CD4-positive, alpha-beta T cell (primary cell): ENCODE measurements at regions of chr19 and their contacts with region 1.

Region 1: GRCh38 chr19:4638828-4639530 is at the start of gene TNFAIP8L1:
- DNase-seq: peak; percentile 98 to 100 (median 99)
- ATAC-seq: peak; percentile 96
- H3K4me3 ChIP-seq: peak within 1 kb of the TSS; percentile 91
- H3K4me3 Mint-ChIP-seq: peak within 1 kb of the TSS; percentile 91
- H3K27ac ChIP-seq: peak within 1 kb of the TSS; percentile 86 to 87
- H3K27ac Mint-ChIP-seq: peak within 1 kb of the TSS; percentile 94
- H3K4me1 ChIP-seq: peaks cover 59% of the 10 kb centered on the region
- H3K4me1 Mint-ChIP-seq: peaks cover 32% of the 10 kb centered on the region
- H3K27me3 ChIP-seq: no peaks in the 10 kb centered on the region
- H3K27me3 Mint-ChIP-seq: no peaks in the 10 kb centered on the region
- CTCF ChIP-seq: no peak
- total RNA-seq, gene TNFAIP8L1: 4.4 to 5.1 TPM

Region 2: GRCh38 chr19:4246767-4247593 is 392.0 kb before region 1 on chr19 and contains the start of gene YJU2:
- CTCF ChIA-PET with region 1: no interaction called
- POLR2A ChIA-PET with region 1: no interaction called
- intact Hi-C with region 1: loop called in 1 of 2 experiments (anchors 10 kb)
- DNase-seq: peak; percentile 96 to 100 (median 98)
- ATAC-seq: peak; percentile 94
- H3K4me3 ChIP-seq: peak within 1 kb of the TSS; percentile 73
- H3K4me3 Mint-ChIP-seq: peak within 1 kb of the TSS; percentile 93
- H3K27ac ChIP-seq: peak within 1 kb of the TSS; percentile 94 to 99
- H3K27ac Mint-ChIP-seq: peak within 1 kb of the TSS; percentile 95
- H3K4me1 ChIP-seq: peaks cover 22% of the 10 kb centered on the region
- H3K4me1 Mint-ChIP-seq: peaks cover 17% of the 10 kb centered on the region
- H3K27me3 ChIP-seq: no peaks in the 10 kb centered on the region
- H3K27me3 Mint-ChIP-seq: peaks cover 1% of the 10 kb centered on the region
- CTCF ChIP-seq: peak; percentile 58
- total RNA-seq, gene YJU2: 32.9 to 33.7 TPM

Region 3: DNA sequence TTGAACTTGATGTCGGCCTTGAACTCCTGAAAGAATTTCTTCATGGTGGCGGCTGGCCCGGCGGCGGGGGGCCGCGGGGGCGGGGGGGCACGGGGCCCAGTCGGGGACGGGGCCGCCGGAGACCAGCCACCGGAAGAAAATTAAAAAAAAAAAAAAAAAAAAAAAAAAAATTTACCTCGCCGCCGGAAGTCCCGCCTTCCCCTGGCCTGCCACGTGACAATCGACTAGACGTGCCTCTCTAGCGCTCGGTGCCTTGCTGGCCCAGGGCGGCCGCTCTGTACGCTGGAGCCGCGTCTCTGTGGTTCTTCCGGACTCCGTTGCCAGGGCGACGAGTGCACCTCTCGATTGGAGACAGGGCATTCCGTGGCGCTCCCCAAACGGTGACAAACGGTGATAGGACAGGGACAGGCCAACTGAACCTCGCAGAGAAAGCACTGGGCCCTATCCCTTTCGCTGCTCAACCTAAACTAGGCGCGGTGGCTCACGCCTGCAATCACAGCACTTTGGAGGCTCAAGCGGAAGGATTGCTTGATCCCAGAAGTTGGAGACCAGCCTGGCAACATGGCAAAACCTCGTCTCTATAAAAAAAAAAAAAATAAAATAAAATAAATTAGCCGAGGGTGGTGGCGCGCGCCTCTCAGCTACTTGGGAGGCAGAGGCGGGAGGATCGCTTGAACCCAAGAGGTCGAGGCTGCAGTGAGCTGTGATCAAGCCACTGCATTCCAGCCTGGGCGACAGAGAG is 181.2 kb before region 1 on chr19 and contains the start of gene UBXN6:
- CTCF ChIA-PET with region 1: no interaction called
- POLR2A ChIA-PET with region 1: no interaction called
- intact Hi-C with region 1: loop called in 1 of 2 experiments (anchors 5 kb)
- DNase-seq: peak; percentile 96 to 100 (median 98)
- ATAC-seq: peak; percentile 95
- H3K4me3 ChIP-seq: peak within 1 kb of the TSS; percentile 70
- H3K4me3 Mint-ChIP-seq: peak within 1 kb of the TSS; percentile 94
- H3K27ac ChIP-seq: peak within 1 kb of the TSS; percentile 49 to 68
- H3K27ac Mint-ChIP-seq: peak within 1 kb of the TSS; percentile 89
- H3K4me1 ChIP-seq: peaks cover 25% of the 10 kb centered on the region
- H3K4me1 Mint-ChIP-seq: peaks cover 16% of the 10 kb centered on the region
- H3K27me3 ChIP-seq: no peaks in the 10 kb centered on the region
- H3K27me3 Mint-ChIP-seq: no peaks in the 10 kb centered on the region
- CTCF ChIP-seq: no peak
- total RNA-seq, gene UBXN6: 54.5 to 58.4 TPM

Region 4: DNA sequence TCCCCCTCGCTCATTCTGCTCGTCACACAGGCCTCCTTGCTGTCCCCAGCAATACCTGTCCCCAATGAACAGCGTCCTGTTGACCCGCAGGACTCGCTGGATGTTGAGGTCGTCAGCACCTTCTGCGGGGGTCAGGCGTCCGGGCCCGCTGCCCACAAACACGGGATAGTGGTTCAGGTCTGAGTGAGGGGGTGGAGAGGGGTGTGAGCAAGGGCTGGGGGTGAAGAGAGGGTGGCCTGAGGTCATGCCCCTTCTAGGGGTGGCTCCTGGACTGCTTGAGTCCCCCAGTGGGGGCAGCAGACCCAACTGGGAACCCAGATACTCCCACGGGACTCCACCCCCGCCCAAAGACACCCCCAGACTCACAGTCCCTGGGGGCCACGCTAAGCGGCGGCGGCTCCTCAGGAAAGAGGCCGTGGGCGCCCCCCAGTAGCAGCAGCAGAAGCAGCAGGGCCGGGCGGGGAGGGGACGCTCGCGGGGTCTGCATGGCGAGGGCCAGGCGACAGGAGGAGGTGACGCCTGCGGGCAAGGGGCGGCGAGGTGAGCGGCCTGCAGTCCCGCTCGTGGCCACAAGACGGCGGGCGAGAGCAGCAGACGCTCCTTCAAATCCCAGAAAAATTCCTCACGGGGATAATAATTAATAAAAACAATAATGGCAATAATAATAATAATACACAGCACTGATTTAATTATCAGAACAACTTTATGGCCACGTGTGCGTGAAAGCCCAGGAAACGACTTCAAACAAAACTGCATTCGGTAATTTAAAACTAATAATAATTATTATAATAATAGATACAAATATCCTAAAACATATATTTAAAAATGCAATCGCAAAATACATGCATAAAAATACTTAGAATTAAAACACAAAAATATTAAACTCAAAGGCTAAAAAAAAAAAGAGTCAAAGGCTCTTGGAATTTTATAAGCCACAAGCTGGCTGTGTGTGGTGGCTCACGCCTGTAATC is 80.7 kb before region 1 on chr19:
- CTCF ChIA-PET with region 1: no interaction called
- POLR2A ChIA-PET with region 1: no interaction called
- intact Hi-C with region 1: loop called (anchors 1 to 2 kb)
- DNase-seq: peak in 12 of 14 experiments; percentile 11 to 66 (median 23)
- ATAC-seq: no peak
- H3K4me3 ChIP-seq: no peak overlapping the region
- H3K4me3 Mint-ChIP-seq: no peak overlapping the region
- H3K27ac ChIP-seq: no peak overlapping the region
- H3K27ac Mint-ChIP-seq: no peak overlapping the region
- H3K4me1 ChIP-seq: peaks cover 7% of the 10 kb centered on the region
- H3K4me1 Mint-ChIP-seq: no peaks in the 10 kb centered on the region
- H3K27me3 ChIP-seq: no peaks in the 10 kb centered on the region
- H3K27me3 Mint-ChIP-seq: no peaks in the 10 kb centered on the region
- CTCF ChIP-seq: peak; percentile 100

Region 5: DNA sequence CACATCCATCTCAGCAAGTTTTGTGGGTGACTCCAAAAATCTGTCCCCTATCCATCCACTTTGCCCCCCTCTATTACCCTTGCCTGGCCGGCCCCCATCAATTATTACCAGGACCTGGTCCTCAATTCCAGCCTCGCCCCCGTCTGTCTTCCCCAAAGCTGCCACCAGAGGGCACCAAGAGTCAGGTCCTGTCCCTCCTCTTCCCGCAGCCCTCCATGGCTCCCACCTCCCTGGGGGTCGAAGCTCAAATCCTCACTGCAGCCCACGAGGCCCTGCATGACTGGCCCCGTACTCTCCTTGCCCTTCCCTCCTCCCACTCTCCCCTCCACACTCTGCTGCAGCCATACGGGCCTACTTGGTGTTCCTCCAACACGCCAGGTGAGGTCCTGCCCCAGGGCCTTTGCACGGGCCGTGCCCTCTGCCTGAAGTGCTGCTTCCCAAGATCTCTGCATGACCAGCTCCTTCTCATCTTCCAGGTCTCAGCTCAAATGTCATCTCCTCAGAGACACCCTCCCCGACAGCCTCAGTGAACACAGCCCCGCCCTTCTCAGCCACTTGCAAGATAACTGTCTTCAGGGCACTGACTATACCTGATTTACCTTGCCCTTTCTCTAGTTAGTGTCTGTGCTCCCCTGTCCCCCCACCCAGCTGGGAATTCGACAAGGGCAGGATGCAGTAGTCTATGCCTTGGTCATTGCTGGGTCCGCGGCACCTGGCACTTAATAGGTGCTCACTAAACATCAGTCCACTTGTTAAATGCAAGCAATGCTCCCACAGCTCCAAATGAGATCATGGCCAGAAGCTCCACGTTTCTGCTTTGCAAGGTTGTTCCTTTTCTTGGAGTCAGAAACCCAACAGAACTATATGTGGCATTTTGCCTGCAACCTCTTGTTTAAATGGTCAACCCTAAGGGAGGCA is 62.7 kb before region 1 on chr19:
- CTCF ChIA-PET with region 1: interaction called, 14 read pairs
- POLR2A ChIA-PET with region 1: interaction called, 3 read pairs
- intact Hi-C with region 1: loop called in 1 of 2 experiments (anchors 1 kb)
- DNase-seq: peak; percentile 52 to 78 (median 64)
- ATAC-seq: peak; percentile 62
- H3K4me3 ChIP-seq: no peak overlapping the region
- H3K4me3 Mint-ChIP-seq: no peak overlapping the region
- H3K27ac ChIP-seq: no peak overlapping the region
- H3K27ac Mint-ChIP-seq: no peak overlapping the region
- H3K4me1 ChIP-seq: no peaks in the 10 kb centered on the region
- H3K4me1 Mint-ChIP-seq: no peaks in the 10 kb centered on the region
- H3K27me3 ChIP-seq: peaks cover 39 to 58% of the 10 kb centered on the region in 2 experiments
- H3K27me3 Mint-ChIP-seq: peaks cover 47% of the 10 kb centered on the region
- CTCF ChIP-seq: peak; percentile 65

Region 6: DNA sequence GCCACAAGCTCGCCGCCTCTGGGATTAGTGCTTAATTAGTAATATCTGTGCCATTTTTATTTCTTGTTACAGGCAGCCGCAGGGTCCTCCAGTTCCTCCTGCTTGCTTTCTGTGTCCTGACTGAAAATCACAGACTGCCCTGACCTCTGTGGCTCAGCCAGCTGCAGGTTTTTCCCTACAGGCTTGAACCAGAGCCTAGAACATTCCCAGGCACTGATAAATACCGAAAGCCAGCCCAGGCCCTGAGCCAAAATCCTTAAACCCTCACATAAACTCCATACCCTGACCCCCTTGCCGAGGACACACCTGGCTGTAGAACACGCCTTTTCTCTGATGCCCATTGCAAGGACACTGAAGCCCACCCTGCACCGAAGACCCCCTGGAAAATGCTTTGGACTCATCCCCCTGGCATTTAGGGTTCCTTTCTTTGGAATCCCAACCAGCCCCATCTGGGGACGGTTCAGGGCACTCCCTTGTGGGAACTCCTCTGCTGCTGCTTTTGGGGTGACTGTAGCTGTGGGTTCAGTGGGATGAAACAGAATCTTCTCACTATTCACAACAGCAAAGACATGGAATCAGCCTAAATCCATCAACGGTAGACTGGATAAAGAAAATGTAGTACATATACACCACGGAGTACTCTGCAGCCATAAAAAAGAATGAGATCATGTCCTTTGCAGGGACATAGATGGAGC is 69.1 kb after region 1 on chr19:
- CTCF ChIA-PET with region 1: no interaction called
- POLR2A ChIA-PET with region 1: no interaction called
- intact Hi-C with region 1: no loop called
- DNase-seq: no peak
- ATAC-seq: no peak
- H3K4me3 ChIP-seq: no peak overlapping the region
- H3K4me3 Mint-ChIP-seq: no peak overlapping the region
- H3K27ac ChIP-seq: no peak overlapping the region
- H3K27ac Mint-ChIP-seq: no peak overlapping the region
- H3K4me1 ChIP-seq: peaks cover 7% of the 10 kb centered on the region
- H3K4me1 Mint-ChIP-seq: no peaks in the 10 kb centered on the region
- H3K27me3 ChIP-seq: no peaks in the 10 kb centered on the region
- H3K27me3 Mint-ChIP-seq: no peaks in the 10 kb centered on the region
- CTCF ChIP-seq: no peak

Region 7: DNA sequence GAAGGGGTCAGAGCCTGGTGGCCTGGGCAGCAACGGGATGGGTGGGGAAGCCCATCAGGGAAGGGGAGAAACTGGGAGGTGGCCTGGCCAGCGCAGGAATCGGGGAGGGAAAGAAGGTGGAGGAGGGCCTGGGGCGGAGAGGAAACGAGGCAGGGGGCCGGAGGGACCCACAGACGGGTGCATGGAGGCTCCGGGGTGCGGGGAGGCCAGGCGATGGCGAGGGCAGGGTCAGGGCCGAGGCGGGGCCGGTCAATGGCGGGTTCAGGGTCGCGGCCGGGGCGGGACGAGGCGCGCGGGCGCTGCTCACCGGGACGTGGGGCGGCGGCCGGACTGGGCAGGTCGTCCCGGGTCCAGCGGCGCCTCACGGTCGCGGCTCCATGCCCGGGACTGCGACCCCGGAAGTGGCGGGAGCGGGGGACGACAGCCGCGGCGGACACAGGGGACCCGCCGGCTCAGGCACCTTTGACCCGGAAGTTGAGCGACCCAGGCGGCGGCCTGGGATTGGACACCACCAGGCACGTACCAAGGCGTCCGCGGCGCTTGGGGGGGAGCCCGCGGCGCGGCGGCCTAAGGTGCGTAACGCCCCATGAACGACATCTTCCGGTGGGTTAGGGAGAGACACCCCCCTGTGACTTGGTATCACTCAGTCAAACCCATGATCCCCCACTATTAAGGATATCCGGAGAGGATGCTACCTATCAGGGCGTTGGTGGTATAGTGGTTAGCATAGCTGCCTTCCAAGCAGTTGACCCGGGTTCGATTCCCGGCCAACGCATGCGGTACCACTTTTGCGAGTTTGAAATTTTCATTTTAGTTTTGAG is 84.6 kb after region 1 on chr19 and contains the start of gene DPP9:
- CTCF ChIA-PET with region 1: interaction called, 3 read pairs
- POLR2A ChIA-PET with region 1: interaction called, 3 read pairs
- intact Hi-C with region 1: loop called in 1 of 2 experiments (anchors 1 kb)
- DNase-seq: peak; percentile 93 to 100 (median 96)
- ATAC-seq: peak; percentile 93
- H3K4me3 ChIP-seq: peak within 1 kb of the TSS; percentile 97
- H3K4me3 Mint-ChIP-seq: peak within 1 kb of the TSS; percentile 95
- H3K27ac ChIP-seq: peak within 1 kb of the TSS; percentile 64 to 85
- H3K27ac Mint-ChIP-seq: peak within 1 kb of the TSS; percentile 97
- H3K4me1 ChIP-seq: peaks cover 30% of the 10 kb centered on the region
- H3K4me1 Mint-ChIP-seq: peaks cover 25% of the 10 kb centered on the region
- H3K27me3 ChIP-seq: no peaks in the 10 kb centered on the region
- H3K27me3 Mint-ChIP-seq: peaks cover 13% of the 10 kb centered on the region
- CTCF ChIP-seq: no peak
- total RNA-seq, gene DPP9: 67.9 to 72.8 TPM